ENCODE measurements at regions of chr12 and their contacts with region 1.

Region 1: GRCh38 chr12:26126340-26127284 is 1.8 kb upstream of the BHLHE41 start:
- DNase-seq: peak; percentile 79
- H3K4me3 Mint-ChIP-seq: peak overlapping the region; percentile 88
- H3K27ac Mint-ChIP-seq: no peak overlapping the region
- H3K4me1 Mint-ChIP-seq: peaks cover 28% of the 10 kb centered on the region
- H3K27me3 Mint-ChIP-seq: peaks cover 80% of the 10 kb centered on the region

Region 2: DNA sequence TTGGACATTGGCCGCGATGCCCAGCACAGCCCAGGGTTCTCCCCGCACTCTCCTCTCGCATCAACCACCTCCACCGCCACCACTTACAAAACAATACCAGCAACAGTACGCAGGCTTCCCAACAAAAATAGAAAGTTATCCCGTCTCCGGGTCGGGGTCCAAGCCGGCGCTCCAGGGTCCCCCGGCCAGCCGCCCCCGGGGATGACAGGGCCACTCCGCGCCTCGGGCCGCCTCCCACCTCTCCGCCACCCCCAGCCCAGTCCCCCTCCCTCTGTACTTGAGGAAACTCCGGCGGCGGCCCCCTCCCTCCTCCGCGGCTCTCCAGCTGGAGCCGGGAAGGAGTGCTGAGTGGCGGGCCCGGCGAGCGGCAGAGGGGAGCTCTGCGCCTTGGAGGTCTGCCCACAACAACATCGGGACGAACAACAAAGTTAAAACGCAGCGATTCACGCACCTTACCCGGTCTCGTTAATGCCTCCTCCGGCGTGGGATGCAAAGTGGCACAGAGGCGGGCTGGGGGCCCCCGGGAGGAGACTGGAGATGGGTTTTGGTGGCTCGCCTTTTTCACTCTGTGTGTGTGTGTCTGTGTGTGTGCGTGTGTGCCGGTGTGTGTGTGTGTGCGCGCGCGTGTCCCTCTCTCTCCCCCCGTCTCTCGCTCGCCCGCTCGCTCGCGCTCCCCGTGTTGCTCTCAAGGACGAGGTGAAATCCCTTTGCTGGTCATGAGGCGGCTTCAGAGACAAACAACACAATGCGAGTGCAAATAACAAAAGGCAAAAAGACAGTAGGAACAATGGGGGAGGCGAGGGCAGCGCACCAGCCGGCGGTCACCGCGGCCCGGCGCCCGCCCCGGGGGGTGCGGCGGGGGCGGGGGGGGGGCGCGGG is 1564.5 kb before region 1 on chr12:
- intact Hi-C with region 1: loop called (anchors 10 kb)
- DNase-seq: peak; percentile 66
- H3K4me3 Mint-ChIP-seq: peak overlapping the region; percentile 93
- H3K27ac Mint-ChIP-seq: peak overlapping the region; percentile 82
- H3K4me1 Mint-ChIP-seq: peaks cover 18% of the 10 kb centered on the region
- H3K27me3 Mint-ChIP-seq: peaks cover 62% of the 10 kb centered on the region

Region 3: GRCh38 chr12:25743679-25744215 is 382.9 kb before region 1 on chr12:
- intact Hi-C with region 1: no loop called
- DNase-seq: no peak
- H3K4me3 Mint-ChIP-seq: no peak overlapping the region
- H3K27ac Mint-ChIP-seq: no peak overlapping the region
- H3K4me1 Mint-ChIP-seq: no peaks in the 10 kb centered on the region
- H3K27me3 Mint-ChIP-seq: peaks cover 6% of the 10 kb centered on the region

Region 4: GRCh38 chr12:26113853-26114719 is 12.5 kb before region 1 on chr12:
- intact Hi-C with region 1: loop called (anchors 1 kb)
- DNase-seq: peak; percentile 84
- H3K4me3 Mint-ChIP-seq: peak overlapping the region; percentile 75
- H3K27ac Mint-ChIP-seq: no peak overlapping the region
- H3K4me1 Mint-ChIP-seq: peaks cover 6% of the 10 kb centered on the region
- H3K27me3 Mint-ChIP-seq: peaks cover 77% of the 10 kb centered on the region

Region 5: GRCh38 chr12:26274441-26275312 is 148.1 kb after region 1 on chr12:
- intact Hi-C with region 1: loop called (anchors 10 kb)
- DNase-seq: peak; percentile 75
- H3K4me3 Mint-ChIP-seq: no peak overlapping the region
- H3K27ac Mint-ChIP-seq: peak overlapping the region; percentile 70
- H3K4me1 Mint-ChIP-seq: peaks cover 19% of the 10 kb centered on the region
- H3K27me3 Mint-ChIP-seq: peaks cover 9% of the 10 kb centered on the region

Region 6: DNA sequence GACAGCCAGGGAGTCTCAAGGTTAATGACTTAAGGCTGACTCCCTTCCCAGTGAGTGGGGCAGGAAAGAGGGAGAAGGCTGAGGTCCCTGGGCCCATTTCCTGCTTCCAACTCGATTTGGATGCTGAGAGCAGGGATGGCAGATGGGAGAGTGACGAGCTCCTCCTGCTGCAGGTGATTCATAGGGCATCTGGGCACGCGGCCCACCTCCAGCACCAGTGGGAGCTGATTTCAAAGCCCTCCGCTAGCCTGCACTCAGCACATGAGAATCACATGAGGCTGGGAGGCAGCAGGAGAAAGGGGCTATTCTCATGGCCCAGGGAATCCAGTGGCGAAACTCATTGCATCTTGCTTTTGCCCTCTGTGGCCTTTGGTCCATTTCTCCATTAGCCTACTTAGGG is 159.6 kb after region 1 on chr12:
- intact Hi-C with region 1: no loop called
- DNase-seq: no peak
- H3K4me3 Mint-ChIP-seq: no peak overlapping the region
- H3K27ac Mint-ChIP-seq: no peak overlapping the region
- H3K4me1 Mint-ChIP-seq: peaks cover 2% of the 10 kb centered on the region
- H3K27me3 Mint-ChIP-seq: peaks cover 9% of the 10 kb centered on the region

Region 7: GRCh38 chr12:26937875-26938700 is 811.5 kb after region 1 on chr12 and contains the starts of genes FGFR1OP2 and INTS13:
- intact Hi-C with region 1: loop called (anchors 5 kb)
- DNase-seq: peak; percentile 99
- H3K4me3 Mint-ChIP-seq: peak within 1 kb of the TSS; percentile 94
- H3K27ac Mint-ChIP-seq: peak within 1 kb of the TSS; percentile 97
- H3K4me1 Mint-ChIP-seq: peaks cover 55% of the 10 kb centered on the region
- H3K27me3 Mint-ChIP-seq: no peaks in the 10 kb centered on the region
- total RNA-seq, gene FGFR1OP2: 45.7 and 46.7 TPM in 2 replicates
- total RNA-seq, gene INTS13: 49.7 and 51.3 TPM in 2 replicates